HepG2 (cell line): ENCODE measurements at regions of chr16 and their contacts with region 1.

Region 1: DNA sequence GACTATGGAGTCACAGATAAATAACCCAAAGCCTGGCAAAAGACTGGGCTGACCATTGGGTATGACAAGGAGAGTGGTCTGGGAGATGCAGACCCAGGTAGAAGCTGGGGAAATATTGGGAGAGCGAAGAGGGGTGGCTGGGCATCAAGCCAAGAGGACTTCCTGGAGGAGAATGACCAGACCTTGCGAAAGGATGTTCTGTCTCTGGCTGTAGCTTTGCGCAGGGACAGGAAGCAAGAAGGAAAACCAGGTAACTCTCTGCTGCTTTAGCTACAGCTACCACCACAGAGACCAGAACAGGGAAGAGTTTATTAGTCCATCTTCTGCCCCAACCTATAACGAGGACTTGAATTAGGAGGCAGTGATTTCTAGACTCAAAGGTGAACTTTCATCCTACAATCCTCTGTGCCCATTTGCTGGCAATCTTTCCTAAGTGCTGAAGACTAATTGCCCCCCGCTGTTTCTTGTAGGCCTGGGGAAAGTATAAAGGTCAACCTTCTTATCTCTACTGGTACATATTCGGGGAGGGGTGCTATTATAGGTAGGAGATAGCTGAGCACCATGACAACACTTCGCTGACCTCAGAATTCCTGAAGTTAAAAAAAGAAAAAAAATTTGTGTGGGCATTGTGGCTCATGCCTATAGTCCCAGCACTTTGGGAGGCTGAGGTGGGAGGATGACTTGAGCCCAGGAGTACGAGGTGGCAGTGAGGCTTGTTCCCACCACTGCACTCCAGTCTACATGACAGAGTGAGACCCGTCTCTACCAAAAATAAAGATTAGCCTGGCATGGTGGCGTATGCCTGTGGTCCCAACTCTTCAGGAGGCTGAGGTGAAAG is 19.1 kb upstream of the KIFC3 start:
- DNase-seq: peak; percentile 86
- ATAC-seq: peak; percentile 54
- H3K4me3 ChIP-seq: no peak overlapping the region
- H3K27ac ChIP-seq: peak overlapping the region; percentile 24
- H3K4me1 ChIP-seq: peaks cover 56% of the 10 kb centered on the region
- H3K27me3 ChIP-seq: no peaks in the 10 kb centered on the region
- CTCF ChIP-seq: no peak
- EP300 ChIP-seq: peak in 1 of 2 experiments; percentile 42; a peak in 1 of 4 replicates
- POLR2A ChIP-seq: no peak
- RAD21 ChIP-seq: no peak; the same call in 1 of the 2 replicates

Region 2: GRCh38 chr16:57810197-57811031 is 11.0 kb before region 1 on chr16:
- CTCF ChIA-PET with region 1: no interaction called
- POLR2A ChIA-PET with region 1: interaction called, 37 read pairs
- in situ Hi-C with region 1: no loop called
- intact Hi-C with region 1: loop called (anchors 2 kb)
- DNase-seq: peak; percentile 92
- ATAC-seq: peak; percentile 93
- H3K4me3 ChIP-seq: peak overlapping the region in 1 of 3 experiments; percentile 41; a peak in 2 of 6 replicates
- H3K27ac ChIP-seq: peak overlapping the region; percentile 63
- H3K4me1 ChIP-seq: peaks cover 71% of the 10 kb centered on the region
- H3K27me3 ChIP-seq: no peaks in the 10 kb centered on the region
- CTCF ChIP-seq: peak; percentile 26; the same call in 1 of the 2 replicates
- EP300 ChIP-seq: peak in 1 of 2 experiments; percentile 80; a peak in 2 of 4 replicates
- POLR2A ChIP-seq: peak; percentile 40 to 85; a peak in 3 of 4 replicates
- RAD21 ChIP-seq: no peak

Region 3: DNA sequence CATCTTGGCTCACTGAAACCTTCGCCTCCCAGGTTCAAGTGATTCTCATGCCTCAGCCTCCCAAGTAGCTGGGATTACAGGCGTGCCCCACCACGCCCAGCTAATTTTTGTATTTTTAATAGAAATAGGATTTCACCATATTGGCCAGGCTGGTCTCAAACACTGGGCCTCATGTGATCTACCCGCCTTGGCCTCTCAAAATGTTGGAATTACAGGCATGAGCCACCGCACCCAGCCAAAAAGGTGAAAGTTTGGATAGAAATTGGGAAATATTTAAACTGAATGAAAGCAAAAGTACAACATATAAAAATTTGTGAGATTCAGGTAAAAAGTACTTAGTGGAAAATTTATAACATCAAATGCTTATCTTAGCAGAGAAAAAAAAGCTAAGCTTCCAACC is 33.8 kb after region 1 on chr16:
- CTCF ChIA-PET with region 1: no interaction called
- POLR2A ChIA-PET with region 1: no interaction called
- in situ Hi-C with region 1: no loop called
- intact Hi-C with region 1: no loop called
- DNase-seq: no peak
- ATAC-seq: no peak
- H3K4me3 ChIP-seq: no peak overlapping the region
- H3K27ac ChIP-seq: no peak overlapping the region
- H3K4me1 ChIP-seq: peaks cover 17% of the 10 kb centered on the region
- H3K27me3 ChIP-seq: no peaks in the 10 kb centered on the region
- CTCF ChIP-seq: no peak
- EP300 ChIP-seq: no peak
- POLR2A ChIP-seq: no peak
- RAD21 ChIP-seq: no peak